ENCODE measurements at regions of chr5 and their contacts with region 1.

Region 1: GRCh38 chr5:142974409-142974808 is 204.2 kb downstream of the ARHGAP26 start:
- DNase-seq: no peak
- H3K4me3 ChIP-seq: no peak overlapping the region
- H3K4me3 Mint-ChIP-seq: no peak overlapping the region
- H3K27ac ChIP-seq: peak overlapping the region in 1 of 2 donors; percentile 63
- H3K27ac Mint-ChIP-seq: peak overlapping the region; percentile 12 to 98 (median 71)
- H3K4me1 ChIP-seq: peaks cover 72 to 79% of the 10 kb centered on the region in 2 donors
- H3K4me1 Mint-ChIP-seq: peaks cover 75% of the 10 kb centered on the region
- H3K27me3 ChIP-seq: no peaks in the 10 kb centered on the region
- H3K27me3 Mint-ChIP-seq: peaks cover 0 to 3% (median 0%) of the 10 kb centered on the region in 3 donors
- CTCF ChIP-seq: no peak

Region 2: GRCh38 chr5:143008809-143009521 is 34.6 kb after region 1 on chr5:
- intact Hi-C with region 1: loop called (anchors 5 kb)
- DNase-seq: peak; percentile 99 to 100 (median 100)
- H3K4me3 ChIP-seq: peak overlapping the region in 1 of 3 experiments; percentile 46
- H3K4me3 Mint-ChIP-seq: peak overlapping the region; percentile 9 to 57
- H3K27ac ChIP-seq: peak overlapping the region; percentile 64 to 100
- H3K27ac Mint-ChIP-seq: peak overlapping the region; percentile 92 to 99 (median 96)
- H3K4me1 ChIP-seq: peaks cover 65 to 67% of the 10 kb centered on the region in 2 donors
- H3K4me1 Mint-ChIP-seq: peaks cover 75% of the 10 kb centered on the region
- H3K27me3 ChIP-seq: no peaks in the 10 kb centered on the region
- H3K27me3 Mint-ChIP-seq: no peaks in the 10 kb centered on the region
- CTCF ChIP-seq: no peak

Measured in CD14-positive monocyte (primary cell).